ENCODE measurements at regions of chr7 and their contacts with region 1.

Region 1: GRCh38 chr7:133050200-133050995 is 31.5 kb downstream of the CHCHD3 start:
- DNase-seq: no peak
- H3K4me3 ChIP-seq: no peak overlapping the region
- H3K27ac ChIP-seq: no peak overlapping the region
- H3K4me1 ChIP-seq: no peaks in the 10 kb centered on the region
- H3K27me3 ChIP-seq: no peaks in the 10 kb centered on the region
- CTCF ChIP-seq: no peak

Region 2: DNA sequence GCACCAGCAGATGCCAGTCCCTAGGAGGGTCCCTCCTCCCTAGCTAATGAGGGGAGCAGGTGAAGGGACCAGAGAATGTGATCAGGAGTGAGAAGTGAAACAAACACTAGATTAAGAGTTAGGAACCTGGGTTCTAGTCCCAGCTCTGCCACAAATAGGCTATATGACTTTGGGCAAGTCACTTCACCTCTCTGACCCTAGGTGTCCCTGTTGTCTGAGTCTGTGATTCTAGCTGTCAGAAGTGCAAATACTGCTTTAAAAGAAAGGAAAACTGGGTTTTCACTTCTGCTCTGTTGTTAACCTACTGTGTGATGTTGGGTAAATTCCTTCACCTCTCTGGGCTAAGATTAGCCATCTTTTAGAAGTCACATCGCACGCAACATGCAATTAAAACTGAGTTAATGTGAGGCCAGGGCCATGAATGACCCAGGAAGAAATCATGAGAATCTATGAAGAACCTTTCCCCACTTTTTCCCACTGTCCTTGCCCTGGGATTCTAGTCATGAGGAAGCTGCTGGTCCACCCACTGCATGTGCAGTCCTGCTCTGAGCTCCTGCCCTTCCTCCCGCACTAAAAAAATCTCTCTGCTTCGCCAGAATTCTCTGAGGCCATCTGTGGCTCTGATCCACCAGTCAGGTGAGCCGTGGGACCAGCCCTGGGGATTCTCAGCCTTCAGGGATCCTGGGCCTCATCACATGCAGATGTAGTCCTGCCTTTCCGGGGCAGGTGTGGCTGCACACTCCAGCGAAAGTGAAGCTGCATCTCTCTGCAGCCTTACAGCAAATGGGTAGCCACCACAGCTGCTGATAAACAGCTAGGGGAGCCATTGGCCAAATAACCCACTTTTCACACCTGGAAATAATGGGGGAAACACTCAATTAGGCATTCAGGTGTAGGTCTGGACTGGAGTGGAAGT is 655.9 kb before region 1 on chr7:
- CTCF ChIA-PET with region 1: no interaction called
- POLR2A ChIA-PET with region 1: no interaction called
- intact Hi-C with region 1: no loop called
- DNase-seq: no peak
- H3K4me3 ChIP-seq: no peak overlapping the region
- H3K27ac ChIP-seq: no peak overlapping the region
- H3K4me1 ChIP-seq: no peaks in the 10 kb centered on the region
- H3K27me3 ChIP-seq: no peaks in the 10 kb centered on the region
- CTCF ChIP-seq: no peak

Region 3: DNA sequence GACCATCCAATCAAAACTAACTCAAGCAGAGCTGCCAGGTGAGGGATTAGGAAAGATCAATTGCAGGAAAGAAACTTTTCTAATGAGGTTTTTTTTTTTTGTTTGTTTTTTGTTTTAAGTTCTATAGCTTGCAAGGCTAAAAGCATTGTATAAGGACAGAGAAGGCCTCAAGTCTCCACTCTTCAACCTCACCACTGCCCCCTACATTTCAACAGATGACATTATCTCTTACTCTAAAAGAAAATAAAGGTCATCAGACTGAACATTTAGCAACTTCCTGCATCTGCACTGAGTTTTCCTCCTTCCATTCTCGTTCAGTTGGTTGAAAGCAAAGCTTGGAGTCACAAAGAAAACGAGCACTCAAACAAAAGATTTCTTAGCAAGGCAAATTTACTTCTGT is 157.3 kb after region 1 on chr7:
- CTCF ChIA-PET with region 1: no interaction called
- POLR2A ChIA-PET with region 1: no interaction called
- intact Hi-C with region 1: no loop called
- DNase-seq: peak; percentile 42
- H3K4me3 ChIP-seq: no peak overlapping the region
- H3K27ac ChIP-seq: no peak overlapping the region
- H3K4me1 ChIP-seq: no peaks in the 10 kb centered on the region
- H3K27me3 ChIP-seq: peaks cover 19% of the 10 kb centered on the region
- CTCF ChIP-seq: peak; percentile 56

Region 4: DNA sequence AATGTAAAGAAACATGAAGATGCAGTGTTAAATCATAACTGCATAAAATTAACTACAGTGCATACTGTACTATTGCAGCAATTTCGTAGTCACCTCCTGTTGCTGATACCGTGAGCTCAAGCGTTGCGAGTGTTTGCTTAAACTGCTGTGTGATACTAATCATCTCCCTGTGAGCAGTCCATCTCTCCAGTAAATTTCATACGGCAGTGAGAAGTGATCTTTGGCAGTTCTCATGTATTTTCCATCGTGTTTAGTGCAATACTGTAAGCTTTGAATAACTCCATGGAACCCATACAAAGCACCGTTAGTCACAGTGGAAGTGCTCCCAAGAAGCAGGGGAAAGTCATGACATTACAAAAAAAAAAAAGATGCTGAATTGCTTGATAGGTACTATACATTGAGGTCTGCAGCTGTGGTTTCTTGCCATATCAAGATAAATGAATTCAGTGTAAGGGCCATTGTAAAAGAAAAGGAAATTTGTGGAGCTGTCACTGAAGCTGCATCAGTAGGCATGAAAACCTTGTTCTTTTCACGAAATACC is 562.9 kb after region 1 on chr7:
- CTCF ChIA-PET with region 1: no interaction called
- POLR2A ChIA-PET with region 1: interaction called, 13 read pairs
- intact Hi-C with region 1: no loop called
- DNase-seq: no peak
- H3K4me3 ChIP-seq: no peak overlapping the region
- H3K27ac ChIP-seq: no peak overlapping the region
- H3K4me1 ChIP-seq: no peaks in the 10 kb centered on the region
- H3K27me3 ChIP-seq: no peaks in the 10 kb centered on the region
- CTCF ChIP-seq: no peak

Measured in A673 (cell line).